GM23248 (cell line): ENCODE measurements at regions of chr22 and their contacts with region 1.

Region 1: DNA sequence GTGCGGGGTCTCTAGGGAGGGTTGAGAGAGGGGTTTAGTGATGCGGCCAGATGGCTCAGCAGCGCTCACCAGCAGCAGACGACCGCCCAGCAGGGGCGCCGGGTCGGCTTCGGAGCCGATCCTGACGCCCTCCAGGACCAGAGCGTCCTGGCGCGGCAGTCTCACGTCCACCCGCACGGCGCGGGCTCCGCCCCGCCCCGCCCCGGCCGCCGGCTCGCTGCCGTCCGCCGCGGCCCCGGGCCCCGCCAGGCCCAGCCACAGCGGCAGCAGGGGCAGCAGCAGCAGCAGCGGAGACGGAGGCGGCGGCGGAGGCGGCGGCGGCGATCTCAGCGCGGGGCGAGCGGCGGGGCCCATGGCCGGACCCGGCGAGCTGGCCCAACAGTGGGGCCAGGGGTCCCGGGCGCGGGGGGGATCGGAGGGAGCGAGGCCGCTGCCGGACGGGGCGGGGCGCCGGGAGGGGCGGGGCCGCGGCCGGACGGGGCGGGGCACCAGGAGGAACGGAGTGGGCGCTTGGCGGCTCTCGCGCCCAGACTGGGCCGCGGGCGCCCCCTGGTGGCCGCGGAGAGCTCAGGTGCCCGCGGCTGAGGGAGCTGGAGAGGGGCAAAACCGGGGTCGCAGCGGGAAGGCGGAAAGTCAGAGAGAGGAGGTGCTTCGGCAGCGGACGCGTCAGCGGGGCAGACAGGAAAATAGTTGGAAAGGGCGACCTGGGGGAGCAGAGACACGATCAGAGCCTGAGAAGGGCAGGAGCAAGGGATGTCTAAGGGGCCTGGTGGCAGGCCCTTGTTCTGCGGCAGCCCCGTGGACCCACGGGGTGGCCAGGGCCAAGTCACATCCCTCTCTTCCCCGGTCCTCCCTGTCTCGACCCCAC is at the start of gene RNF215:
- DNase-seq: peak; percentile 88
- H3K4me3 ChIP-seq: peak within 1 kb of the TSS; percentile 79
- H3K27ac ChIP-seq: peak within 1 kb of the TSS; percentile 34; the same call in 1 of the 2 replicates
- H3K4me1 ChIP-seq: peaks cover 9% of the 10 kb centered on the region
- H3K27me3 ChIP-seq: no peaks in the 10 kb centered on the region
- total RNA-seq, gene RNF215: 29.9 and 45.1 TPM in 2 replicates

Region 2: GRCh38 chr22:29689880-29690213 is 697.3 kb before region 1 on chr22:
- in situ Hi-C with region 1: no loop called
- DNase-seq: peak; percentile 75
- H3K4me3 ChIP-seq: no peak overlapping the region
- H3K27ac ChIP-seq: no peak overlapping the region
- H3K4me1 ChIP-seq: no peaks in the 10 kb centered on the region
- H3K27me3 ChIP-seq: no peaks in the 10 kb centered on the region

Region 3: GRCh38 chr22:30104501-30105156 is 282.6 kb before region 1 on chr22:
- in situ Hi-C with region 1: loop called (anchors 10 kb)
- DNase-seq: peak; percentile 50
- H3K4me3 ChIP-seq: no peak overlapping the region
- H3K27ac ChIP-seq: no peak overlapping the region
- H3K4me1 ChIP-seq: peaks cover 16% of the 10 kb centered on the region
- H3K27me3 ChIP-seq: no peaks in the 10 kb centered on the region

Region 4: DNA sequence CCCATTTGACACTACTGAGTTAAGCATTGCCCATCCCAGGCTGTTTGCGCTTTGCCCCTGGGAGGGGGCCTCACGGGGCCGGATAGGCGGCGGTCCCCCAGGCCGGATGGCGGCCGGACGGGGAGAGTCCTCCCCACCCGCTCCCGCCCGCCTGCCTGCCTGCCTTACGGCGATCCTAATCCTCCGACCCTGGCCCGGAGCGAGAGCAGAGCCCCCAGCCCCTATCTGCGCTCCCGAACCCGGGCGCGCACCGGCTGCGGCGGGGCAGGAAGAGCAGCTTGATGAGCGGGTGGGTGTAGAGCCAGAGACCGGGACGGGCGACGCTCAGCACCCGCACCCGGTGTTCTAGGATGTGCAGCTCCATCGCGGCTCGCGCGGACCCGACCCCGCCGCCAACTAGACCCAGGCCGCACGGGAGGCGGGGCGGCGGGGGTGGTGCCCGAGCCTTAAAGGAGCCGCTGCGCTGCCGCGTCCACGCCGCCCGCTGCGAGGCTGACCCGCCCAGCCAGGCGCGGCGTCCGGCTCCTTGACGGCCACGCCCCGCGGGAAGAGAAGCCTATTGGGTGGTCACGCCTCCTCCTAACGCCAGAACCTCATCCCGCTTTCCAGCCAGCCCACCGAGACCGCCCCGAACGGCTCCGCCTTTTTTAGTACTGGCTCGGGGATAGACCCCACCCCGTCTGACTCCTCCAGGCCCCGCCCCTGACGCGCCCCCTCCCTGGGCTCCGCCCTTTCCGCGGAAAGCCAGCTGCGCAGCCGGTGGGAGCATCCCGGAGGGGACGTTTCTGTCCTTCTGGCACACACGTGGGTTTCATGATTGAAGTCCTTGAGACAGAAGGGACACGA is 97.8 kb before region 1 on chr22 and contains the start of gene CASTOR1:
- in situ Hi-C with region 1: loop called (anchors 10 kb)
- DNase-seq: peak; percentile 100
- H3K4me3 ChIP-seq: peak within 1 kb of the TSS; percentile 82
- H3K27ac ChIP-seq: peak within 1 kb of the TSS; percentile 20
- H3K4me1 ChIP-seq: peaks cover 20% of the 10 kb centered on the region
- H3K27me3 ChIP-seq: no peaks in the 10 kb centered on the region
- total RNA-seq, gene CASTOR1: 10.2 and 13.4 TPM in 2 replicates